ENCODE measurements at regions of chr17 and their contacts with region 1.

Region 1: GRCh38 chr17:42760652-42761581 is at the start of gene RAMP2:
- DNase-seq: no peak
- H3K4me3 Mint-ChIP-seq: no peak within 1 kb of the TSS
- H3K27ac Mint-ChIP-seq: no peak within 1 kb of the TSS
- H3K4me1 Mint-ChIP-seq: peaks cover 5% of the 10 kb centered on the region
- H3K27me3 Mint-ChIP-seq: peaks cover 49% of the 10 kb centered on the region
- total RNA-seq, gene RAMP2: not detected

Region 2: GRCh38 chr17:42312285-42313130 is 448.4 kb before region 1 on chr17:
- CTCF ChIA-PET with region 1: no interaction called
- POLR2A ChIA-PET with region 1: no interaction called
- intact Hi-C with region 1: no loop called
- DNase-seq: peak; percentile 92
- H3K4me3 Mint-ChIP-seq: peak overlapping the region; percentile 42
- H3K27ac Mint-ChIP-seq: peak overlapping the region; percentile 74
- H3K4me1 Mint-ChIP-seq: peaks cover 76% of the 10 kb centered on the region
- H3K27me3 Mint-ChIP-seq: no peaks in the 10 kb centered on the region

Region 3: GRCh38 chr17:42704837-42705494 is 56.0 kb before region 1 on chr17:
- CTCF ChIA-PET with region 1: interaction called, 7 read pairs
- POLR2A ChIA-PET with region 1: no interaction called
- intact Hi-C with region 1: loop called (anchors 5 kb)
- DNase-seq: peak; percentile 73
- H3K4me3 Mint-ChIP-seq: no peak overlapping the region
- H3K27ac Mint-ChIP-seq: peak overlapping the region; percentile 18
- H3K4me1 Mint-ChIP-seq: peaks cover 46% of the 10 kb centered on the region
- H3K27me3 Mint-ChIP-seq: no peaks in the 10 kb centered on the region

Region 4: DNA sequence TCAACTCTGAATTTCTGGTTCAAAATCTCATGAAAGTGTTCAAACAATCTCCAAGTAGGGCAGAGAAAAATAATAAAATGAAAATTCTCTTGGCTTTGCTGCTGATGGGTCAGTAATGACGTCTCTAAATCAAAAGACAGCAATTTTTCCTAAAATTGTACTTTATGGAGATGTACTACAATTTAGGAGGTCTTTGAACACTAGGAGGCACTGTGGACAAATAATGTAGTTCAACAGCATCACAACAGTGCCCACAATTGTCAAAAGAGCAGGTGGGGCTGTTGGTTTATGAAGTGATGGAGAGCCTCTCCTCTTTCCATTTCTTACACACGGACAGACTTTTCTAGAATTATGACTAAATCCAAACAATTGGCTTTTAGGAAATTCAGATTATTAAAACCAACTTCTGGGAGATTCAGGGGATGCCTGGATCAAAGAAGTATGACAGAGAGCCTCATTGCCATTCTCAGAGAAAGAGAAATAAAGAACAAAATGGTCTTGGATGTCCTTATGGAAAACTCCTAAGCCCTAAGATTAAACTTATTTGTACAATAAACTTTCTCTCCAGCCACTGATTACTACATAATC is 39.8 kb before region 1 on chr17:
- CTCF ChIA-PET with region 1: interaction called, 14 read pairs
- POLR2A ChIA-PET with region 1: no interaction called
- intact Hi-C with region 1: loop called (anchors 1 kb)
- DNase-seq: peak; percentile 14
- H3K4me3 Mint-ChIP-seq: no peak overlapping the region
- H3K27ac Mint-ChIP-seq: no peak overlapping the region
- H3K4me1 Mint-ChIP-seq: peaks cover 2% of the 10 kb centered on the region
- H3K27me3 Mint-ChIP-seq: no peaks in the 10 kb centered on the region

Region 5: DNA sequence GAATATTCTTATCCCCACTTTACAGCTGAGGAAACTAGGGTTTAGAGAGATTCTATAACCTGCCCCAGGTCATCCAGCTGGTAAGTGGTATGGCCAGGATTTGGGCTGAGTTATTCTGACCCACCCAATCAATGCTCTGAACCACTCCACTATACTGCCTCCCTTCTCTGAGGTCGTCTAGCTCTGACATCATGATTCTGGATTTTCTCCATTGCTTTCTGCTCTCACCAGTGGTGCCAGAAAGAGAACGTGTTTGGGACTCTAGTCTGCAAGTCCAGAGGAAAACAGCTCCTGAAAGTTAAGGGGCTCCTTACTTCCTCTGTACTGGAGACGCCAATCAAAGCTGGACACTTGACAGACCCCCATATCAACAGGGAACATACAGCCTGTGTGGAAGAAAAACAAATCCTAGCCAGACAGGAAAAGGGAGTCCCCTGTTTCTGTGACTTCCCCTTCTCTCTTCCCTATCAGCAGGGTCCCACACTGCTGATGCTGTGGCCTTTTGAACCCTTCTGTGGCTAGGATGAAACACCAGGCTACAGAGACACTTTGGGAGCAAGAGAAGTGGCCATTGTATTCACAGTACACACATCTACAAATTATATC is 10.1 kb before region 1 on chr17:
- CTCF ChIA-PET with region 1: interaction called, 41 read pairs
- POLR2A ChIA-PET with region 1: no interaction called
- intact Hi-C with region 1: no loop called
- DNase-seq: no peak
- H3K4me3 Mint-ChIP-seq: no peak overlapping the region
- H3K27ac Mint-ChIP-seq: no peak overlapping the region
- H3K4me1 Mint-ChIP-seq: no peaks in the 10 kb centered on the region
- H3K27me3 Mint-ChIP-seq: peaks cover 14% of the 10 kb centered on the region

Region 6: DNA sequence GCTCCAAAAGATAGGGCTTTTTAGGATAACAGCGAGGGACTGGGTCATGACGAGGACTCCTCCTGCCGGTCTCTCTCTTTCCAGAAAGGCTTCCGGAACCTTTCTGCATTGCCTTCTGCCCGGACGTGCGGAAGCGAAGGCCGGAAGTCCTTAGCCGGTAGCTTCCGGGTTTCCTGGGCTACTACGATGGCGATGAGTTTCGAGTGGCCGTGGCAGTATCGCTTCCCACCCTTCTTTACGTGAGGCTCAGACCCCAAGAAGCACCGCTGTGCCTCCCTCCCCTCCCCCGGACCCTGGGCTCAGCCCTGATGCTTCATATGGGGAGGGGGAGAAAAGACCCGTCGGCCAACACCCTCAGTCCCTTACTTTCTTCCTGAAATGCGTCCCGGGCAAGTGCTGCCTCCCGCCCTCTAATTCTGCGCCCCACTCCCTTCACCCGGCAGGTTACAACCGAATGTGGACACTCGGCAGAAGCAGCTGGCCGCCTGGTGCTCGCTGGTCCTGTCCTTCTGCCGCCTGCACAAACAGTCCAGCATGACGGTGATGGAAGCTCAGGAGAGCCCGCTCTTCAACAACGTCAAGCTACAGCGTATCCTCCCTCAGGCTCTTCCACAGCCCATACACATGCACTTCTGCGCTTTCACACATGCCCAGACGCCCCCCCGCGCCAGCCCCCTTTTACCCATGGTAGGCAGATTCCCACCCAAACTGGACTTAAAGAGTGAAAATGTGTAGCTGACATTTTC is 12.5 kb after region 1 on chr17 and contains the start of gene VPS25:
- CTCF ChIA-PET with region 1: interaction called, 44 read pairs
- POLR2A ChIA-PET with region 1: interaction called, 6 read pairs
- intact Hi-C with region 1: no loop called
- DNase-seq: peak; percentile 84
- H3K4me3 Mint-ChIP-seq: peak within 1 kb of the TSS; percentile 100
- H3K27ac Mint-ChIP-seq: peak within 1 kb of the TSS; percentile 87
- H3K4me1 Mint-ChIP-seq: peaks cover 22% of the 10 kb centered on the region
- H3K27me3 Mint-ChIP-seq: no peaks in the 10 kb centered on the region
- total RNA-seq, gene VPS25: 57.5 to 58.6 TPM

Region 7: GRCh38 chr17:42779936-42780850 is 19.3 kb after region 1 on chr17 and contains the start of gene WNK4:
- CTCF ChIA-PET with region 1: interaction called, 44 read pairs
- POLR2A ChIA-PET with region 1: no interaction called
- intact Hi-C with region 1: no loop called
- DNase-seq: no peak
- H3K4me3 Mint-ChIP-seq: no peak within 1 kb of the TSS
- H3K27ac Mint-ChIP-seq: no peak within 1 kb of the TSS
- H3K4me1 Mint-ChIP-seq: peaks cover 23% of the 10 kb centered on the region
- H3K27me3 Mint-ChIP-seq: peaks cover 40% of the 10 kb centered on the region
- total RNA-seq, gene WNK4: 0.10 to 0.15 TPM

Region 8: DNA sequence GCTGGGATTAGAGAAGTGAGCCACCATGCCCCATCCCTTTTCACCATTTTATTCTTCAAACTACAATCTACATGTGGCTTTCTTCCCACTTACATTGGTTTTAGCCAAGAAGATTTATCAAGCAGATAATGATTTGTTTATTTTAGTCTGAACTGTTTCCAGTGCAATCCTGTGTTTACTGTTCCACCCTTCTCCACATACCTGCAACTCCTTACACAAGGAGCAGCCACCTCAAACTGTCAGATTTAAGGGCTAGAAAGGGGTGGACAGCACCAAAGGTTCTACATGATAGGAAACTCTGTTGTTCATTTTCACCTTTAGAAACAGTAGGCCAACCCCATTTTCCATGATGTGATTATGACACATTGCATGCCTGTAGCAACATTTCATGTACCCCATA is 221.3 kb after region 1 on chr17:
- CTCF ChIA-PET with region 1: no interaction called
- POLR2A ChIA-PET with region 1: no interaction called
- intact Hi-C with region 1: no loop called
- DNase-seq: no peak
- H3K4me3 Mint-ChIP-seq: no peak overlapping the region
- H3K27ac Mint-ChIP-seq: no peak overlapping the region
- H3K4me1 Mint-ChIP-seq: peaks cover 28% of the 10 kb centered on the region
- H3K27me3 Mint-ChIP-seq: no peaks in the 10 kb centered on the region

Measured in activated CD4-positive, alpha-beta memory T cell treated with anti-CD3 and anti-CD28 coated beads for 36 hours (primary cell).